Activated CD4-positive, alpha-beta memory T cell treated with anti-CD3 and anti-CD28 coated beads for 36 hours (primary cell): ENCODE measurements at regions of chr1 and their contacts with region 1.

Region 1: DNA sequence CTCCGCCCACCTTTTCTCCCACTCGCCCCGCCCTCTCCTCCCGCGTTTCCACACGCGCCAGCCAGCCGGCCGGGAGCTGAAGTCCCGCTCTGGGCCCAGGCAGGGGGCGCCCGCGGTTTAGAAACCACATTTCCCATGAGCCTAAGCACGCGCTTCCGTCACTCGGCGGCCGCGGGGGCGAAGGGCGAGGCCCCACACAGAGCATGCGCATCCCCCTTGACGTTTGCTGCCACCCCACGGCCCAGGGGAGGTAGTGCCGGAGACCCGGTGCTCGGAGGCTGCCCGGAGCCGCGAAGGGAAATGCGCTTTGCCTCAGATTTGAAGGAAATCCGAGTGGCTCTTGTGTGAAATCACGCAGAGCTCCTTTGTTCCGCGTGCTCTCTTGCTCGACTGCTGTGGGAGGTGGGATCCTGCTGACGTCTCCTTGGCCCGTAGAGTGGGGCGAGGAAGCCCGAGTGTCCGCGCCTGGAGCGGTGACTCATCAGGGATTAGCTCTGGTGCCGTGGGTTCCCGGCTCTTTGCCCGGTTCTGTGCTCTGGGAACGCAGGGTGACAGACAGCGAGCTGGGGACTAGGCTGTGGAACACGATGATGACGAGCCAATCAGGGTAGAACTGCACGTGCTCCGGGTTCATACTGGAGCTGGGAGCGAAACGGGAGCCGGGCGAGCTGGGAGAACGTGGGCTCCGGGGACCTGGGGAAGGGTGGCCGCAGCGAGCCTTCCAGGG is 407 bp upstream of the B3GALNT2 start:
- DNase-seq: peak; percentile 99
- H3K4me3 Mint-ChIP-seq: peak overlapping the region; percentile 86
- H3K27ac Mint-ChIP-seq: peak overlapping the region; percentile 95
- H3K4me1 Mint-ChIP-seq: peaks cover 32% of the 10 kb centered on the region
- H3K27me3 Mint-ChIP-seq: no peaks in the 10 kb centered on the region

Region 2: DNA sequence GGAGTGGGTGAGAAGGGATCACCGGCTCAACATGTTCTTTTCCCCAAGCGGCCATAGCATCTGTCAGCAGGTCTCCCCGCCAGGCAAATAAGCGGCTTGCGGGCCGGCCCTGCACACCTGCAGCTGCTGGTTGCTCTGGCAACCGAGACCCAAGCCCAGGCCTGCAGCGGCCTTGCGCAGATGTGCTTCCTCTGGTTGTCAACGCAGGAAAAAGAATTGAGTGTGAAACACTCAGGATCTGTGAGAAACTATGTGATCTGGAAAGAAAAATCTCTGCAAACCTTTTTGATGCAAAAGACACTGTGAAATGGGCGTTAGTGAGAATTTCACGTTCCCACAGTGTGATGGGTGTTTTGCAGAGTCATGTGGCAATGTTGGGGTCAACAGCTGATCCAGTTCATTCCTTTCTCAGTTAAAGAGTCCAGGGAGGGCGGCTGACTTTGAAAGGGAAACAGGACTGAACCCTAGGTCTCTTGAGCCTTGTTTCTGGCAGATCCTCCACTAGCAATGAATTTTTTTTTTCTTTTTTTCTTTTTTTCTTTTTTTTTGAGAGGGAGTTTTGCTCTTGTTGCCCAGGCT is 404.4 kb before region 1 on chr1:
- CTCF ChIA-PET with region 1: no interaction called
- POLR2A ChIA-PET with region 1: no interaction called
- intact Hi-C with region 1: loop called (anchors 5 kb)
- DNase-seq: no peak
- H3K4me3 Mint-ChIP-seq: no peak overlapping the region
- H3K27ac Mint-ChIP-seq: no peak overlapping the region
- H3K4me1 Mint-ChIP-seq: peaks cover 22% of the 10 kb centered on the region
- H3K27me3 Mint-ChIP-seq: no peaks in the 10 kb centered on the region

Region 3: GRCh38 chr1:235128456-235129328 is 376.0 kb before region 1 on chr1 and contains the start of gene TOMM20:
- CTCF ChIA-PET with region 1: interaction called, 3 read pairs
- POLR2A ChIA-PET with region 1: no interaction called
- intact Hi-C with region 1: loop called (anchors 5 kb)
- DNase-seq: peak; percentile 98
- H3K4me3 Mint-ChIP-seq: peak within 1 kb of the TSS; percentile 86
- H3K27ac Mint-ChIP-seq: peak within 1 kb of the TSS; percentile 94
- H3K4me1 Mint-ChIP-seq: peaks cover 41% of the 10 kb centered on the region
- H3K27me3 Mint-ChIP-seq: no peaks in the 10 kb centered on the region
- total RNA-seq, gene TOMM20: 127 to 142 TPM

Region 4: GRCh38 chr1:235138821-235139220 is 365.8 kb before region 1 on chr1:
- CTCF ChIA-PET with region 1: no interaction called
- POLR2A ChIA-PET with region 1: no interaction called
- intact Hi-C with region 1: no loop called
- DNase-seq: peak; percentile 63
- H3K4me3 Mint-ChIP-seq: no peak overlapping the region
- H3K27ac Mint-ChIP-seq: peak overlapping the region; percentile 40
- H3K4me1 Mint-ChIP-seq: peaks cover 20% of the 10 kb centered on the region
- H3K27me3 Mint-ChIP-seq: no peaks in the 10 kb centered on the region

Region 5: GRCh38 chr1:235423191-235423652 is 81.4 kb before region 1 on chr1:
- CTCF ChIA-PET with region 1: no interaction called
- POLR2A ChIA-PET with region 1: no interaction called
- intact Hi-C with region 1: no loop called
- DNase-seq: peak; percentile 44
- H3K4me3 Mint-ChIP-seq: no peak overlapping the region
- H3K27ac Mint-ChIP-seq: no peak overlapping the region
- H3K4me1 Mint-ChIP-seq: peaks cover 16% of the 10 kb centered on the region
- H3K27me3 Mint-ChIP-seq: no peaks in the 10 kb centered on the region

Region 6: GRCh38 chr1:235642011-235642942 is 137.6 kb after region 1 on chr1:
- CTCF ChIA-PET with region 1: interaction called, 3 read pairs
- POLR2A ChIA-PET with region 1: interaction called, 5 read pairs
- intact Hi-C with region 1: loop called (anchors 2 kb)
- DNase-seq: peak; percentile 89
- H3K4me3 Mint-ChIP-seq: peak overlapping the region; percentile 71
- H3K27ac Mint-ChIP-seq: peak overlapping the region; percentile 85
- H3K4me1 Mint-ChIP-seq: peaks cover 32% of the 10 kb centered on the region
- H3K27me3 Mint-ChIP-seq: peaks cover 17% of the 10 kb centered on the region

Region 7: GRCh38 chr1:235783148-235783776 is 278.6 kb after region 1 on chr1:
- CTCF ChIA-PET with region 1: interaction called, 14 read pairs
- POLR2A ChIA-PET with region 1: no interaction called
- intact Hi-C with region 1: no loop called
- DNase-seq: no peak
- H3K4me3 Mint-ChIP-seq: no peak overlapping the region
- H3K27ac Mint-ChIP-seq: no peak overlapping the region
- H3K4me1 Mint-ChIP-seq: no peaks in the 10 kb centered on the region
- H3K27me3 Mint-ChIP-seq: no peaks in the 10 kb centered on the region

Region 8: GRCh38 chr1:235866913-235867845 is 362.5 kb after region 1 on chr1:
- CTCF ChIA-PET with region 1: interaction called, 3 read pairs
- POLR2A ChIA-PET with region 1: interaction called, 3 read pairs
- intact Hi-C with region 1: loop called (anchors 2 kb)
- DNase-seq: peak; percentile 98
- H3K4me3 Mint-ChIP-seq: peak overlapping the region; percentile 89
- H3K27ac Mint-ChIP-seq: peak overlapping the region; percentile 98
- H3K4me1 Mint-ChIP-seq: peaks cover 45% of the 10 kb centered on the region
- H3K27me3 Mint-ChIP-seq: no peaks in the 10 kb centered on the region